A673 (cell line): ENCODE measurements at regions of chr13 and their contacts with region 1.

Region 1: GRCh38 chr13:108508263-108508662 is 121.1 kb upstream of the MYO16 start:
- DNase-seq: peak; percentile 45
- H3K4me3 ChIP-seq: no peak overlapping the region
- H3K27ac ChIP-seq: no peak overlapping the region
- H3K4me1 ChIP-seq: no peaks in the 10 kb centered on the region
- H3K27me3 ChIP-seq: no peaks in the 10 kb centered on the region
- CTCF ChIP-seq: peak; percentile 64

Region 2: DNA sequence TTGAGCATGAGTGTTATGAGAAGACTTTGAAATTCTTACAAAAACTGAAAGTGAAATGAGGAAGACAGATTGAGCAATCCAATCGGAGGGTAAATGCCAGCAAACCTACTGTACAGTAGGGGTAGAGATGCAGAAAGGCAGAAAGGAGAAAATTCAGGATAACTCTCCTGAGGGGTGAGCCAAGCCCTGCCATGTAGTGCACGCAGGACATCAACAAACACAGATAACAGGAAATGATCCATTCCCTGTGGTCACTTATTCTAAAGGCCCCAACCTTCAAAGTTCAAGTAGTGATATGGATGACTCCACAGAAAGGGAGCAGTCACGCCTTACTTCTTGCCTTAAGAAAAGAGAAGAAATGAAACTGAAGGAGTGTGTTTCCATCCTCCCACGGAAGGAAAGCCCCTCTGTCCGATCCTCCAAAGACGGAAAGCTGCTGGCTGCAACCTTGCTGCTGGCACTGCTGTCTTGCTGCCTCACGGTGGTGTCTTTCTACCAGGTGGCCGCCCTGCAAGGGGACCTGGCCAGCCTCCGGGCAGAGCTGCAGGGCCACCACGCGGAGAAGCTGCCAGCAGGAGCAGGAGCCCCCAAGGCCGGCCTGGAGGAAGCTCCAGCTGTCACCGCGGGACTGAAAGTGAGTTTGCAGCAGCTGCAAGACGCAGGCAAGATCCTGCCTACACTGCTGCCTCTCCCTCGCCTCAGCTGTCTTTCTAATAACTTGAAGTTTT is 238.5 kb before region 1 on chr13 and contains the start of gene TNFSF13B:
- CTCF ChIA-PET with region 1: no interaction called
- POLR2A ChIA-PET with region 1: no interaction called
- intact Hi-C with region 1: no loop called
- DNase-seq: peak; percentile 62
- H3K4me3 ChIP-seq: peak within 1 kb of the TSS; percentile 41
- H3K27ac ChIP-seq: peak within 1 kb of the TSS; percentile 84
- H3K4me1 ChIP-seq: peaks cover 59% of the 10 kb centered on the region
- H3K27me3 ChIP-seq: no peaks in the 10 kb centered on the region
- CTCF ChIP-seq: peak; percentile 34; the same call in 1 of the 2 replicates
- total RNA-seq, gene TNFSF13B: 9.2 and 11.2 TPM in 2 replicates

Region 3: GRCh38 chr13:108322206-108322824 is 185.9 kb before region 1 on chr13:
- CTCF ChIA-PET with region 1: no interaction called
- POLR2A ChIA-PET with region 1: no interaction called
- intact Hi-C with region 1: loop called (anchors 5 kb)
- DNase-seq: peak; percentile 62
- H3K4me3 ChIP-seq: no peak overlapping the region
- H3K27ac ChIP-seq: no peak overlapping the region
- H3K4me1 ChIP-seq: peaks cover 13% of the 10 kb centered on the region
- H3K27me3 ChIP-seq: no peaks in the 10 kb centered on the region
- CTCF ChIP-seq: peak; percentile 78

Region 4: GRCh38 chr13:108342369-108343289 is 165.6 kb before region 1 on chr13:
- CTCF ChIA-PET with region 1: interaction called, 3 read pairs
- POLR2A ChIA-PET with region 1: no interaction called
- intact Hi-C with region 1: loop called (anchors 5 kb)
- DNase-seq: peak; percentile 58
- H3K4me3 ChIP-seq: no peak overlapping the region
- H3K27ac ChIP-seq: no peak overlapping the region
- H3K4me1 ChIP-seq: no peaks in the 10 kb centered on the region
- H3K27me3 ChIP-seq: no peaks in the 10 kb centered on the region
- CTCF ChIP-seq: peak; percentile 71